Activated CD4-positive, alpha-beta memory T cell treated with anti-CD3 and anti-CD28 coated beads for 36 hours (primary cell): ENCODE measurements at regions of chr13 and their contacts with region 1.

Region 1: GRCh38 chr13:111184458-111185401 is 69.6 kb downstream of the ARHGEF7 start:
- DNase-seq: peak; percentile 60
- H3K4me3 Mint-ChIP-seq: peak overlapping the region; percentile 48
- H3K27ac Mint-ChIP-seq: peak overlapping the region; percentile 80
- H3K4me1 Mint-ChIP-seq: peaks cover 88% of the 10 kb centered on the region
- H3K27me3 Mint-ChIP-seq: no peaks in the 10 kb centered on the region

Region 2: DNA sequence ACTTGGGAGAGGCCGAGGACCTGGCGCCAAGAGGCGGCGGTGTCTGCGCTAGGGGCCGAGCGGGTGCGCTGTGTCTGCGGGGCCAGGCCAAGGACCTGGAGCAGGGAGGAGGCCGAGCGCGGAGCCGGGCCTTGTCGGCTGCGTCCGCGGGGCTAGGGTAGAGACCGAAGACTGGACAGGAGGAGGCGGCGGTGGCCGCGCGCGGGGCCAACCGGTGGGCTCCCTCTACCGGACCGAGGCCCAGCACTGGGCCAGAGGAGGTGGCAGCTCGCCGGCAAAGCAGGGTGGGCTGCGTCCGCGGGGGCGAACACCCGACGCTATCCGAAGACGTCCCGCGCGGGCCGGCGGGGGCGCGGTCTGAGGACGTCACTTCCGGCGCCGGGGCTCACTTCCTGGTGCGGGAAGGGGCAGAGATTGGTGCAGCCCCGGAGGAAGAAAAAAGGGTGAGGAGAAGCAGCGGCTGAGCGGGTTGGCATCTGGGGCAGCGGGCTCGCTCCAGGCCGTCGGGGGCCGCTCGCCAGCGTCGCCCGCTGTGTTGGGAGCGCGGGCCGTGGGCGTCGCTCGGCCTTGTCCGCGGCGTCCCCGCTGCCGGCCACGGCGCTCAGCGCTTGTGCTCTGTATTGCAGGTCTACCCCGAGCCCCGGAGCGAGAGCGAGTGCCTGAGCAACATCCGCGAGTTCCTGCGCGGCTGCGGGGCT is 31.3 kb before region 1 on chr13:
- CTCF ChIA-PET with region 1: interaction called, 4 read pairs
- POLR2A ChIA-PET with region 1: interaction called, 3 read pairs
- intact Hi-C with region 1: loop called (anchors 2 kb)
- DNase-seq: peak; percentile 95
- H3K4me3 Mint-ChIP-seq: peak overlapping the region; percentile 87
- H3K27ac Mint-ChIP-seq: peak overlapping the region; percentile 89
- H3K4me1 Mint-ChIP-seq: peaks cover 28% of the 10 kb centered on the region
- H3K27me3 Mint-ChIP-seq: no peaks in the 10 kb centered on the region

Region 3: DNA sequence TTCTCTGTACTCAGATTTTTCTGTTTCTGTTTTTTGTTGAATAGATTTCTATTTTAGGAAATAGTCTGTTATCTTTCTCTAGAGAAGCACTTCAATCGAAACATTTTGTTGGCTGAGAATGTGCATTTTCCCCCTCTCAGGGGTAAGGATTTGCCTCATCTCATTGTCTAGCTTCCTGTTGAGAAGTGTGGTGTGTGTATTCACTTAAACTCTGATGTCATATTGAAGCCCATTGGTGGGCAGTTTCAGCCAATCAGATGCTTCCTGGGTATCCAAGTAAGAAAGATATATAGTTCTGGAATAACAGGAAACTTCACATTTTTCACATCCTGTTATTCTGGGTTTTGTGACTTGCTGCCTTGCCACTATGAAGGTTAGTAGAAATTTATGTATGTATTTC is 18.0 kb after region 1 on chr13:
- CTCF ChIA-PET with region 1: interaction called, 3 read pairs
- POLR2A ChIA-PET with region 1: no interaction called
- intact Hi-C with region 1: loop called (anchors 1 kb)
- DNase-seq: peak; percentile 30
- H3K4me3 Mint-ChIP-seq: no peak overlapping the region
- H3K27ac Mint-ChIP-seq: peak overlapping the region; percentile 13
- H3K4me1 Mint-ChIP-seq: peaks cover 55% of the 10 kb centered on the region
- H3K27me3 Mint-ChIP-seq: no peaks in the 10 kb centered on the region